Activated CD8-positive, alpha-beta T cell treated with anti-CD3 and anti-CD28 coated beads, Interleukin-2, amount 10 ng/mL, durations not matched to agents 7 days and 5 days (primary cell): ENCODE measurements at regions of chr1 and their contacts with region 1.

Region 1: DNA sequence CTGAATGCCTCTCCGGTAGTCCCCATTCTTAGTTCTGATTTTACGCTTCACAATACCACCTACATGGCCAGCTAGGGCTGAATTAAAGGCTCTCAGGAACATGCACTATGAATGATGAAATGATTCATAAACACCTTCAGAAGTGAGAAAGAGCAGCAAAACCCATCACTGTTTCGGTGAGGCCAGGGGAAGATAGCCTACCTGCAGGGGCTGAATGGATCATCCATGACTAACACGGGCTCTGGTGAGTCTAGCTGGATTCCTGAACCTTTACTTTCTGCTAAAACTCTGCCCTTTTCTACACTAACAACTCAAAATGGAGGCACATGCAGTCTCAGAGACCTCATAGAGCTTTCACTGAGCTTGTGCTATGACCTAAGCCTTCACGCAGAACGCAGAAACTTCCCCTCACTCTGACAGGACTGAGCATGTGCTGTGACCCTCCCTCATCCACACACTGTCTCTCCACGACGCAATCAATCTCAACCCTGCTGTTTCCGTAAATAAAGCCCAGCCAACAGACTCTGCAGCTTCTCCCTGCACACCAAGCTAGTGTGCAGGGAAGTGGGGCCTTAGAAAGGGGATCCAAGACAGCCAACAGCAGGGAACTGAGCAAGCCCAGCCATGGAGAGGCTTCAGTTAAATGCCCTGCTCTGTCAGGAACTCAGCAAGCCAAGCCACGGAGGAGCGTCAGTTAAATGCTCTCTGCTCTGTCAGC is 207.8 kb downstream of the SLC45A1 start:
- DNase-seq: peak; percentile 65
- ATAC-seq: peak; percentile 80
- H3K4me3 Mint-ChIP-seq: no peak overlapping the region
- H3K27ac Mint-ChIP-seq: no peak overlapping the region
- H3K4me1 Mint-ChIP-seq: peaks cover 8% of the 10 kb centered on the region
- H3K27me3 Mint-ChIP-seq: no peaks in the 10 kb centered on the region

Region 2: DNA sequence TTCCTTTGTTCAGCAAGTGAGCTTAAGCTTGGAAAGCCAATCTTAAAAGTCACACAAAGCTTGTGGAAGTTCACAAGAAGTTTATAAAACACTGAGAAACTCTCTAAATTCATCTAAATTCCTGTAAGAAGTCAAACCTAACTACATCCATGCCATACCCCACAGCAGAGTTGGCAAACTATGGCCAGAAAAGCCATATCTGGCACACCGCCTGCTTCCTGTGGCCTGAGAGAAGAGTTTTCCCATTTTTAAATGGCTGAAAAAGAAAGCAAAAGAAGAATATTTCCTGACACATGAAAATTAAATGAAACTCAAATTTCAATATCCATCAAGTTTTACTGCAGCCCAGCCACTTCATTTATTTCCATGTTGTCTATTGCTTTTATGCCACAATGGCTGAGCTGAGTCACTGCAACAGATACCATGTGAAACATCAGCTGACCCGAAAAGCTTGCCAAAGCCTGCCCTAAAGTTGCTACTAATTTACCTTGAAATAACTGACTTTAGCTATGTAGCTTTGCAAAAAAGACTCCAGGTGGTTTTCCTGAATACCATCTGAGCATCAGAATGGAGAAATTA is 29.3 kb after region 1 on chr1:
- CTCF ChIA-PET with region 1: interaction called, 12 read pairs
- POLR2A ChIA-PET with region 1: no interaction called
- DNase-seq: no peak
- ATAC-seq: peak; percentile 38
- H3K4me3 Mint-ChIP-seq: no peak overlapping the region
- H3K27ac Mint-ChIP-seq: no peak overlapping the region
- H3K4me1 Mint-ChIP-seq: peaks cover 37% of the 10 kb centered on the region
- H3K27me3 Mint-ChIP-seq: no peaks in the 10 kb centered on the region